Activated CD4-positive, alpha-beta T cell treated with anti-CD3 and anti-CD28 coated beads for 36 hours (primary cell): ENCODE measurements at regions of chr9 and their contacts with region 1.

Region 1: GRCh38 chr9:132006677-132007370 is 72.8 kb downstream of the MED27 start:
- DNase-seq: peak; percentile 65
- ATAC-seq: peak; percentile 98
- H3K4me3 Mint-ChIP-seq: no peak overlapping the region
- H3K27ac Mint-ChIP-seq: no peak overlapping the region
- H3K4me1 Mint-ChIP-seq: peaks cover 28% of the 10 kb centered on the region
- H3K27me3 Mint-ChIP-seq: no peaks in the 10 kb centered on the region

Region 2: DNA sequence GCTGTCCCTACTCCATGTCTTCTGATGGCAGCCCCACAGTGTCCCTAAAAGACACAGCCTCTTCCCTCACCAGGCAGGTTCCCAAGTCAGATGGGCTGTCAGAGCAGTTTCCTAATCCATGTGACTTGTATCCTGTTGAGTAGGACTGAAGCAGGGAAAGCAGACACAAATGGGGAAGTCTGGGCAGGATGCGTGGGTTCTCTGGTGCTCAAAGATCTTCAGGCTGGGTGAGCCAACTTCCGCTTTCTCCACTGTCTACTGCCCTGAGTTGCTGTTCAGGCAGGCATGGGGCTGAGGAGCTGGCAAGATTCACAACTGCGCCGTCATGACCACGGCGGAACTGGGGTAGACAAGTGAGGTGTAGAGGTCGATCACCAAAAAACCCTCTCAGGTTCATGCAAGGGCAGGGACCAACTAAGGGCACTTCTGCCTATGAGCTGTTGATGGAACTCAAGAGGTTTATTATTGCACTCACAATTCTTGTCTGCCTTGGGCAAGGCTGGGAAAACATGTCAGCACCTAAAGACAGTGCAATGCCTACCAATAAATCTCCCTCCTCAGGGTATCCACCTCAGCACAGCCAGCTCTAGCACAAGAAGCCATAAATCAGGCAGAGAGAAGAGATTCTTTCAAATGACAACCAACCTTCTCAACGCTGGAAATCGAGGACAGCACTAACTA is 350.3 kb before region 1 on chr9:
- CTCF ChIA-PET with region 1: no interaction called
- POLR2A ChIA-PET with region 1: no interaction called
- intact Hi-C with region 1: loop called in 1 of 2 experiments (anchors 10 kb)
- DNase-seq: peak; percentile 81
- ATAC-seq: peak; percentile 68
- H3K4me3 Mint-ChIP-seq: peak overlapping the region; percentile 39
- H3K27ac Mint-ChIP-seq: peak overlapping the region; percentile 87
- H3K4me1 Mint-ChIP-seq: peaks cover 83% of the 10 kb centered on the region
- H3K27me3 Mint-ChIP-seq: no peaks in the 10 kb centered on the region

Region 3: DNA sequence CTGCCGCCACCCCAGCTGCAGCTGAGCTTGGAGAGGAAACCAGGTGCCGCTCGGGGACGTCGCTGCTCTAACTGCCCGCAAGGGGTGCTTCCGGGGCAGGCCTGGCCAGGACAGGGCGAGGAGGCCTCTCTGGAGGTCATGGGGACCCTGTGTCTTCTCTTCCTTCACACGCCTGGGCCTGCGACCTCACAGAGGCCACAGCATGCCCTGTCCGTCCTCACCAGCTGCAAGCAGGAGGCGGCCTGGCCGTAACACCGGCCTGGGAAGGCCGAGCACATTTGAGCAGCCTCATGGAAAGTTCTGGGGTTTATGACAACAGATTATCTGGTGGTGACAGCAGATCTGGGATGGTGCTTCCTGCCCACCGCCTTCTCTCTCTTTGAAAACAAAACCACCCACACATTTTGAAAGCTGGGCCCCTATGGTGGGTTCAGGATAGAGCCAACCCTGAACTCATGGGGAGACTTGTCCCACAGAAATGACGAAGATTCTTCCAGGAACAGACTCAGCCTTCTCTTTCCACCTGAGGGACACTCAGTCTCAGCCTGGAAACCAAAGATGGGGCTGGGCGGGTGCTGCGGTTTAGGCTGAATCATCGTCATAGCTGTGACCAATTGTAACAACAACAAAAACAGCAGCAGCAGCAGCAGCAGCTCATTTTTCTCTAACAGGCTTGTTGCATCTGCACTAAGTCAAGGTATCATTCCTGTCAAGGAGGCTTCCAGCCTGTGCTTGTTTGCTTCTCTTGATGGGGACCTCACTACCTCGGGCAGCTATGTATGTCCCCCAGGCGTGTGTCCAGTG is 167.3 kb before region 1 on chr9:
- CTCF ChIA-PET with region 1: interaction called, 3 read pairs
- POLR2A ChIA-PET with region 1: no interaction called
- intact Hi-C with region 1: loop called in 1 of 2 experiments (anchors 1 kb)
- DNase-seq: peak; percentile 86
- ATAC-seq: peak; percentile 86
- H3K4me3 Mint-ChIP-seq: peak overlapping the region; percentile 12
- H3K27ac Mint-ChIP-seq: peak overlapping the region; percentile 87
- H3K4me1 Mint-ChIP-seq: peaks cover 16% of the 10 kb centered on the region
- H3K27me3 Mint-ChIP-seq: peaks cover 7% of the 10 kb centered on the region

Region 4: GRCh38 chr9:132144708-132145365 is 138.0 kb after region 1 on chr9:
- CTCF ChIA-PET with region 1: no interaction called
- POLR2A ChIA-PET with region 1: no interaction called
- intact Hi-C with region 1: loop called in 1 of 2 experiments (anchors 1 kb)
- DNase-seq: peak; percentile 59
- ATAC-seq: peak; percentile 97
- H3K4me3 Mint-ChIP-seq: no peak overlapping the region
- H3K27ac Mint-ChIP-seq: no peak overlapping the region
- H3K4me1 Mint-ChIP-seq: peaks cover 14% of the 10 kb centered on the region
- H3K27me3 Mint-ChIP-seq: peaks cover 68% of the 10 kb centered on the region